Activated CD4-positive, alpha-beta T cell treated with anti-CD3 and anti-CD28 coated beads for 36 hours (primary cell): ENCODE measurements at regions of chr15 and their contacts with region 1.

Region 1: GRCh38 chr15:67150028-67150860 is 84.8 kb downstream of the SMAD3 start:
- DNase-seq: peak; percentile 74
- ATAC-seq: peak; percentile 67
- H3K4me3 Mint-ChIP-seq: peak overlapping the region; percentile 60
- H3K27ac Mint-ChIP-seq: peak overlapping the region; percentile 82
- H3K4me1 Mint-ChIP-seq: peaks cover 67% of the 10 kb centered on the region
- H3K27me3 Mint-ChIP-seq: no peaks in the 10 kb centered on the region

Region 2: DNA sequence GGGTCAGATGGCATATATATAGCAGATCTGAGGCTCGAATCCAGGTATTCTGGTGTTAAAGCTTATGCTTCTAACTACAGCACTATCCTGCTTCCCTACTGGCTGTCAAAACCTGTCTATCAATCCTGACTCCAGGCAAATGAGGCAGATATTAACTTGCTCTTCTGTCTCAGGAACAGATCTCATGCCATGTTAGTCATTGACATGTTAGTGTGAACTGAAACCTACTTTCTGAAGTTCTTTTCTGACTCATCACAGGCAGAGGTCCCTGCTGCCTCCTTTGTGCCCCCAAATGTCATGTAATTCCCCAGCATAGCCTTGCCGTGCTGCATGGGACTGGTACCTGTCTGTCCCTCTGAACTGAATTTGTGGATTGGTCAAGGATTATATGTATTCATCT is 209.9 kb before region 1 on chr15:
- CTCF ChIA-PET with region 1: no interaction called
- POLR2A ChIA-PET with region 1: no interaction called
- intact Hi-C with region 1: loop called in 1 of 2 experiments (anchors 5 kb)
- DNase-seq: peak; percentile 42
- ATAC-seq: peak; percentile 94
- H3K4me3 Mint-ChIP-seq: no peak overlapping the region
- H3K27ac Mint-ChIP-seq: no peak overlapping the region
- H3K4me1 Mint-ChIP-seq: peaks cover 14% of the 10 kb centered on the region
- H3K27me3 Mint-ChIP-seq: peaks cover 2% of the 10 kb centered on the region

Region 3: GRCh38 chr15:67065444-67066093 is 84.7 kb before region 1 on chr15 and contains the start of gene SMAD3:
- CTCF ChIA-PET with region 1: interaction called, 4 read pairs
- POLR2A ChIA-PET with region 1: interaction called, 3 read pairs
- intact Hi-C with region 1: loop called in 1 of 2 experiments (anchors 1 kb)
- DNase-seq: peak; percentile 85
- ATAC-seq: peak; percentile 39
- H3K4me3 Mint-ChIP-seq: peak within 1 kb of the TSS; percentile 91
- H3K27ac Mint-ChIP-seq: peak within 1 kb of the TSS; percentile 92
- H3K4me1 Mint-ChIP-seq: peaks cover 47% of the 10 kb centered on the region
- H3K27me3 Mint-ChIP-seq: peaks cover 17% of the 10 kb centered on the region
- total RNA-seq, gene SMAD3: 33.7 to 40.8 TPM

Region 4: DNA sequence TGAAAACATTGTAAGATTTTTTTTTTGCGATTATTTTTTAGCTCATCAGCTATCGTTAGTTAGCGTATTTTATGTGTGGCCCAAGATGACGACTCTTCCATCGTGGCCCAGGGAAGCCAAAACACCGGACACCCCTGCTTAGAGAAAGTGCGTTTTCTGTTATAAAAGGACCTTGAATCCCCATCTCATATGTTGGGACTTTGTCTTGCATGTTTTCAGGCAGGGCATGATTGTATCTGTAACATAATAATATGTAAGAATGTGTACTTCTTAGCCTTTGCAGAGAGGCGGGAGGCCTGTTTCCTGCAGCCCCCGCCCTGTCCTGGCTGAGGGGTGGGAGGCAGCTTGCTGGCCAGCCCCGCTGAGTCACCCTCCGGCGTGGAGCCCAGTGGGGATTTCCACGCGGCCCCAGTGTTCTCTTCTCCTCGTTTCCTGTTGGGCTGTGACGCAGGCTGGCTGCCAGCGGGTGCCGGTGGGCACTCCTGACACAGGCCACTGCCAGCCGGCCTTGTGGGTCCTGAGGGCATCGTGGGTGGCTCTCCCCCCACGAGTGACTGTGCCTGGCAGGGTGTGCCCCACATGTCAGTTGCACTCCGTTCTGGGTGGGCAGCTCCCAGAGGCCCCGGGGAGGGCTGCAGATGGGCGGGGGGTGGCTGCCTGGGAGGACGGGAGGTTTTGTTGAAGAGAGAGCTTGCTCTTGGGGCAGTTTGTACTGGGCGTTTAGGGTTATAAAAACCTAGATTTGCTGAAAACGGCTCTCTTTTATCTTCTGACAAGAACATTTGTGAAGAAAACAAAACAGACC is 29.2 kb before region 1 on chr15:
- CTCF ChIA-PET with region 1: no interaction called
- POLR2A ChIA-PET with region 1: no interaction called
- intact Hi-C with region 1: loop called in 1 of 2 experiments (anchors 2 kb)
- DNase-seq: peak; percentile 93
- ATAC-seq: peak; percentile 88
- H3K4me3 Mint-ChIP-seq: peak overlapping the region; percentile 70
- H3K27ac Mint-ChIP-seq: peak overlapping the region; percentile 98
- H3K4me1 Mint-ChIP-seq: peaks cover 82% of the 10 kb centered on the region
- H3K27me3 Mint-ChIP-seq: no peaks in the 10 kb centered on the region

Region 5: DNA sequence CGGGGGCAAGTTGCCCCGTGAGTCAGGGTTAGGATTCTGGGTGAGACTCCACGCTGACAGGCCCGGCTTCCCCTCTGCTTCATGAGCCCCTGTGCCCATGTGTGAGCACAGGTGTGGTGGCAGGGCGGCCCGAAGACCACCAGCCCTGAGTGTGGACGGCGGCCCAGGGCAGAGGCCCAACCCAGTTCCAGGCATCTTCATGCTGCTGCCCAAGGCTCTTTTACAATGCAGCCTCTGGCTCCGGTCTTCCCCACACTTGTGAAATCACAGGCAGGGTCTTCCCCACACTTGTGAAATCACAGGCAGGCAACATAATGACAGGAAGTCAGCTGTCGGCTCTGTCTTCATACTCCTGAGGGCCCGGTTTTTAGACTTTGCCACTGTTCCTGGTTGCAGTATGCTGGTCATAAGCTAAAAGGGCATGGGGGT is 25.4 kb after region 1 on chr15:
- CTCF ChIA-PET with region 1: no interaction called
- POLR2A ChIA-PET with region 1: no interaction called
- intact Hi-C with region 1: loop called (anchors 2 kb)
- DNase-seq: peak; percentile 75
- ATAC-seq: peak; percentile 76
- H3K4me3 Mint-ChIP-seq: peak overlapping the region; percentile 4
- H3K27ac Mint-ChIP-seq: peak overlapping the region; percentile 92
- H3K4me1 Mint-ChIP-seq: peaks cover 65% of the 10 kb centered on the region
- H3K27me3 Mint-ChIP-seq: no peaks in the 10 kb centered on the region

Region 6: DNA sequence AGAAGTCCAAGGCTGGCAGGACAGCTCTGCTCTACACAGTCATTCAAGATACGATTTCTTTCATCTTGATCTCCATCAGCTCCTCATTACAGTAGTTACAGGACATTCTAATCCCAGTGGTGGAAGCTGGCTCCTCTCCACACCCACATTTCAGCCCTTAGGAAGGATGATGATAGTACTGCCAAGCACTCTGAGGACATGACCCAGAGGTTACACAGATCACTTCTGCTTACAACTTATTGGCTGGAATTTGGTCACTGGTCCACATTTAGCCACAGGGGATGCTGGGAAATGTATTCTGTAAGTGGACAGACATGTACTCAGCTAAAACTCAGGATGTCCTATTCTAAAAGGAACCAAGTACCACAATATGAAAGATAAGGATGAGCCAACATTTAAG is 181.4 kb after region 1 on chr15:
- CTCF ChIA-PET with region 1: no interaction called
- POLR2A ChIA-PET with region 1: no interaction called
- intact Hi-C with region 1: no loop called
- DNase-seq: no peak
- ATAC-seq: no peak
- H3K4me3 Mint-ChIP-seq: no peak overlapping the region
- H3K27ac Mint-ChIP-seq: no peak overlapping the region
- H3K4me1 Mint-ChIP-seq: no peaks in the 10 kb centered on the region
- H3K27me3 Mint-ChIP-seq: no peaks in the 10 kb centered on the region